CD14-positive monocyte (primary cell): ENCODE measurements at regions of chr5 and their contacts with region 1.

Region 1: DNA sequence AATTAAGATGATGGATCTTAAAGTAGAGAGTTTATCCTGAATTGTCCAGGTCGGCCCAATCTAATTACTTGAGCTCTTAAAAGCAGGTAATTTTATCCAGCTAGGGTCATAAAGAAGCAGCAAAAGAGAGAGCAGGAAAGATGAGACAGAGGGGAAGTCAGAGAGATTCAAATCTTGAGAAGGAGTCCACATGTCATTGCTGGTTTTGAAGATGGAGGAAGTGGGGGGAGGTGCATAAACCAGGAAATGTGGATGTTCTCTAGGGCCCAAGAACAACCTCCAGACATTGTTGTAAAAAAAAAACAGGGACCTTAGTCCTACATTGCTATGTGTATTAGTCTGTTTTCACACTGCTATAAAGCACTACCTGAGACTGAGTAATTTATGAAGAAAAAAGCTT is 66.4 kb downstream of the SLCO4C1 start:
- DNase-seq: peak in 2 of 3 donors; percentile 6 to 7
- H3K4me3 ChIP-seq: no peak overlapping the region
- H3K4me3 Mint-ChIP-seq: no peak overlapping the region
- H3K27ac ChIP-seq: no peak overlapping the region
- H3K27ac Mint-ChIP-seq: peak overlapping the region in 3 of 7 donors; percentile 20 to 79 (median 53)
- H3K4me1 ChIP-seq: peaks cover 8% of the 10 kb centered on the region in 2 donors
- H3K4me1 Mint-ChIP-seq: peaks cover 16% of the 10 kb centered on the region
- H3K27me3 ChIP-seq: no peaks in the 10 kb centered on the region
- H3K27me3 Mint-ChIP-seq: no peaks in the 10 kb centered on the region
- CTCF ChIP-seq: no peak

Region 2: DNA sequence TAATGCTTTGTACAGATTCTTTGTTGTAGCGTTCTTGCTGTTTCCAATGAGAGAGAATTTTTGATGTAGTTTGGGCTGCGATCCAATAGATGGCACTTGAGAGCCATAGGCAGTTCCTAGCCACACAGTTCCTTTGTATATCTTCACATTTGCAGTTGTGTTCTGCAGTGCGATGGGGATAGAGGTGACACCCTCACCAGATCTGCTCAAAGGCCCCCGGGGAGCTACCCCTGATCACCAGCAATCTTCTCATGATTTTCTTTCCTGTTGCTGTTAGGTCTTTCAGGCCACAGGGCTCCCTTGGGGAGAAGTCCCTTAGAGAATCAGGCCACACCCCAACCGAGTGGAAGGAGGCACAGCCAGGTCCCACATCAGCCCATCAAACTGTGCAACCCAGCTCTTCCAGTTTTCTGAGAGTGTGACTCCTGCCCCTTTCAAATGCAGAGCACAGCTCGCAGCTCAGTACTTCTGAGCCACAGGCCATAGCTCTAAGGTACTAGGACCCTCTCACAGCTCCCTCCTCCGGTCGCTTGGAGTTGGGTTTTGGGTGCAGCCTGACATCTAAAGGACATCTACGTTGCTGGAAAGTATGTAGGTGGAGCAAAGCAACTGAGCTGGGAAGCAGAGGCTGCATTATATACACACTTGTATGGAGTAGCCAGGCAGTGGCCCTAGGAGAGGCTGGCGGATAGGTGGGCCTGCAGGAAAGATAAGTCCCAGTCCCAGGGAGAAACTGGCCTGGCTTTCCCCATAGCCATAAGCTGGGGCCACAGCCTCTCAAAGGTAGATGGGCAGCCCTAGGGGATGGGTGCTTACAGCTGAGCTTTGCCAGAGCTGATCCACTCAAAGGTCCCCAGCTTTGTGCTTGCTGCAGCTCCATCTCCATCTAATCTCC is 287.1 kb before region 1 on chr5:
- intact Hi-C with region 1: loop called in 1 of 2 experiments (anchors 5 kb)
- DNase-seq: peak; percentile 1 to 30 (median 30)
- H3K4me3 ChIP-seq: no peak overlapping the region
- H3K4me3 Mint-ChIP-seq: no peak overlapping the region
- H3K27ac ChIP-seq: no peak overlapping the region
- H3K27ac Mint-ChIP-seq: no peak overlapping the region
- H3K4me1 ChIP-seq: peaks cover 17 to 18% of the 10 kb centered on the region in 2 donors
- H3K4me1 Mint-ChIP-seq: peaks cover 18% of the 10 kb centered on the region
- H3K27me3 ChIP-seq: no peaks in the 10 kb centered on the region
- H3K27me3 Mint-ChIP-seq: peaks cover 0 to 2% (median 0%) of the 10 kb centered on the region in 3 donors
- CTCF ChIP-seq: peak; percentile 69

Region 3: GRCh38 chr5:102249381-102249780 is 19.7 kb after region 1 on chr5:
- intact Hi-C with region 1: no loop called
- DNase-seq: no peak
- H3K4me3 ChIP-seq: no peak overlapping the region
- H3K4me3 Mint-ChIP-seq: no peak overlapping the region
- H3K27ac ChIP-seq: no peak overlapping the region
- H3K27ac Mint-ChIP-seq: no peak overlapping the region
- H3K4me1 ChIP-seq: peaks cover 4 to 7% of the 10 kb centered on the region in 2 donors
- H3K4me1 Mint-ChIP-seq: peaks cover 9% of the 10 kb centered on the region
- H3K27me3 ChIP-seq: no peaks in the 10 kb centered on the region
- H3K27me3 Mint-ChIP-seq: peaks cover 0 to 2% (median 0%) of the 10 kb centered on the region in 3 donors
- CTCF ChIP-seq: no peak